Aorta (tissue), 5 donors: ENCODE measurements at regions of chr10 and their contacts with region 1.

Region 1: DNA sequence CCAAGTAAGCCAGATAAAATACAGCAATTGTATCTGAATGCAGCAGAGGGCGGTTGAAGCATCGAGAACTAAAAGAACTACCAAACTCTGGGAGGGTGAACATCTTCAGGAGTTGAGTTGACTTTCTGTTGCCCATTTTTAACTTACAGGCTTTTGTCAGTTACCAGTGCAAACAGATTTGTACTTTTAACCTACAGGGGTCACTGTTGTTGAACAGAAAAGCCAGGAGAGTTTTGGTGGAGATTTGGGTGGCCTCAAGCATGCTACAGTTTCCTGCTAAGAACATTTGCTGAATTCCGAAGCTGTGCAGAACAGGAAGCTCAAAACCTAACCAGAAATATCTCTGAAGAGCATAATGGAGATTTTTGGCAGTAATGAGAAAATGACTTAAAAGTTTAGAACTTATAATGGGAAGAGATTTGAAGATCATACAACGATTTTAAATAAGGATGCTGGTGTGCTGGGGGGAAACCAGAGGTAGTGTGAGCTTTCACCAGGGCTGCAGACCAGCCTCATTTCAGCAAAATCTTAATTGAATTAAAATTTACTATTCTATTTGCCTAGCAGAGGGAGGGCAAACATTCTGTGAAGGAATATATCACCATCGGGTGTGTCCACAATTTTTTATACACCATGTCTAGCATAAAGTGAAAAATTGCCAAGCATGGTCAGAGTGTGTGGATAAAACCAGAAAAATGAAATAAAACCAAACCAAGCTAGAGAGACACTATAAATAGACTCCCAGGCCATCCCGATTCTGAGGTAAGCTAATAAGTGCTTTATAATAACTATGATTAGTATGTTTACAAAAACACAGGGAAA is 208.6 kb upstream of the CCDC6 start:
- DNase-seq: no peak
- ATAC-seq: peak; percentile 73
- H3K4me3 ChIP-seq: no peak overlapping the region
- H3K27ac ChIP-seq: no peak overlapping the region
- H3K4me1 ChIP-seq: peaks cover 0 to 2% of the 10 kb centered on the region in 2 donors
- H3K27me3 ChIP-seq: no peaks in the 10 kb centered on the region

Region 2: GRCh38 chr10:60208676-60209269 is 93.8 kb after region 1 on chr10:
- intact Hi-C with region 1: loop called (anchors 1 to 5 kb)
- DNase-seq: no peak
- ATAC-seq: no peak
- H3K4me3 ChIP-seq: no peak overlapping the region
- H3K27ac ChIP-seq: no peak overlapping the region
- H3K4me1 ChIP-seq: peaks cover 0 to 3% of the 10 kb centered on the region in 2 donors
- H3K27me3 ChIP-seq: no peaks in the 10 kb centered on the region

Region 3: GRCh38 chr10:60258429-60258797 is 143.4 kb after region 1 on chr10:
- intact Hi-C with region 1: no loop called
- DNase-seq: no peak
- ATAC-seq: no peak
- H3K4me3 ChIP-seq: no peak overlapping the region
- H3K27ac ChIP-seq: no peak overlapping the region
- H3K4me1 ChIP-seq: no peaks in the 10 kb centered on the region
- H3K27me3 ChIP-seq: no peaks in the 10 kb centered on the region